ENCODE measurements at regions of chr1 and their contacts with region 1.

Region 1: DNA sequence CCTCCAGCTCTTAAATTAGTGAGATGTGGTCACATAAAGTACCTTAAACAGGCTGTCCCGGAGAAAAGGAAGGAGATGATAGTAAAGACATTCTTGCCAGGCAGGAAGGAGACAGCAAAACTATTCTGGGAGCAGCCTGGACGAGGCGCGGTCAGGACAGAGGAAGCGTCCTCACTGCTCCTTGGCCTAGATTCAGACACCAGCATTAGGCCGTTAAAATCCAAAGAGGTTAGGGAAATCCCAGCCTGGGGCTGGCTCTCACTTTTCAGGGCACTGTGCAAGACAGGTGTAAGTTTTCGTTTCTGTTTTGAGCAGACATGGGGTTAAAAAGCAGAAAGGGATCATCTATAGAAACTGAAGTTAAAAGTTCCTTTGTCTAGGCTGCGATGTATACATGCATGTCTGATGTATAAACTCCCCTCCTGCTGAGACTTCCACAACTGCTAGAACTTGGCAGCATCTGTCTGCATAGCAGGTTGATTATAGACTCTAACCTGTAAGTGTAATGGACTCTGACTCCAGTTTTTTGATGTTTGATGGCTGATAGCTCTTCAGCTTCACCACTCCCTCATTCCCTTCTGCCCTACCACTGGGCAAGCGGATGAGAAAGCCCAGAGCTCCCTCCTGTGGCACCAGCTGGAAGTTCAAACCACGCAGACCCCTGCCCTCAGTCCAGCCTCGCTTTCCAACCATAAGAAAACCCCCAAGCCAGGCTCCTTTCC is 21.5 kb downstream of the STPG1 start:
- DNase-seq: peak; percentile 47 to 50
- H3K4me3 ChIP-seq: no peak overlapping the region
- H3K27ac ChIP-seq: peak overlapping the region; percentile 14; the same call in 1 of the 2 replicates
- H3K4me1 ChIP-seq: peaks cover 8% of the 10 kb centered on the region
- H3K27me3 ChIP-seq: no peaks in the 10 kb centered on the region
- CTCF ChIP-seq: peak; percentile 80

Region 2: DNA sequence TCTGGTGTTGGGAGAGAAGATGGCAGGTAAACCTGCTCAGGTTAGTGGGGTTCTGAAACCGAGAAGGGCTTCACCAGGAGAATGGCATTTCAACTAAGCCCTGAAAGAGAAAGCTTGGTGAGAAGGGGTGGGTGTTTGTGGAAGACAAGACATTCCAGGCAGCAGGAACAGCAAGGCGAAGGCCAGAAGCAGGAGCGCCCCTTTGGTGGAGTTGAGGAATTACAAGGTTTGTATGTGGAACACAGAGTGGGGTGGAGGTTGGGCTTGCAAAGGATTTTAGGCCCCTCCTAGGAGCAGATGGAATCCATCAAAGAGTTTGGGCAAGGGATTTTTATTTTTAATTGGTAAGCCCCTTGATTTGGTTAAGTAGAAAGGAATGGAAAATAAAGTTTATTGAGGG is 673.6 kb before region 1 on chr1:
- CTCF ChIA-PET with region 1: interaction called, 18 read pairs
- POLR2A ChIA-PET with region 1: no interaction called
- intact Hi-C with region 1: no loop called
- DNase-seq: peak in 1 of 2 experiments; percentile 22
- H3K4me3 ChIP-seq: no peak overlapping the region
- H3K27ac ChIP-seq: no peak overlapping the region
- H3K4me1 ChIP-seq: no peaks in the 10 kb centered on the region
- H3K27me3 ChIP-seq: no peaks in the 10 kb centered on the region
- CTCF ChIP-seq: peak; percentile 70

Region 3: GRCh38 chr1:24070821-24071393 is 321.1 kb before region 1 on chr1:
- CTCF ChIA-PET with region 1: no interaction called
- POLR2A ChIA-PET with region 1: no interaction called
- intact Hi-C with region 1: loop called (anchors 1 kb)
- DNase-seq: peak; percentile 57 to 76
- H3K4me3 ChIP-seq: no peak overlapping the region
- H3K27ac ChIP-seq: no peak overlapping the region
- H3K4me1 ChIP-seq: no peaks in the 10 kb centered on the region
- H3K27me3 ChIP-seq: no peaks in the 10 kb centered on the region
- CTCF ChIP-seq: peak; percentile 88

Region 4: DNA sequence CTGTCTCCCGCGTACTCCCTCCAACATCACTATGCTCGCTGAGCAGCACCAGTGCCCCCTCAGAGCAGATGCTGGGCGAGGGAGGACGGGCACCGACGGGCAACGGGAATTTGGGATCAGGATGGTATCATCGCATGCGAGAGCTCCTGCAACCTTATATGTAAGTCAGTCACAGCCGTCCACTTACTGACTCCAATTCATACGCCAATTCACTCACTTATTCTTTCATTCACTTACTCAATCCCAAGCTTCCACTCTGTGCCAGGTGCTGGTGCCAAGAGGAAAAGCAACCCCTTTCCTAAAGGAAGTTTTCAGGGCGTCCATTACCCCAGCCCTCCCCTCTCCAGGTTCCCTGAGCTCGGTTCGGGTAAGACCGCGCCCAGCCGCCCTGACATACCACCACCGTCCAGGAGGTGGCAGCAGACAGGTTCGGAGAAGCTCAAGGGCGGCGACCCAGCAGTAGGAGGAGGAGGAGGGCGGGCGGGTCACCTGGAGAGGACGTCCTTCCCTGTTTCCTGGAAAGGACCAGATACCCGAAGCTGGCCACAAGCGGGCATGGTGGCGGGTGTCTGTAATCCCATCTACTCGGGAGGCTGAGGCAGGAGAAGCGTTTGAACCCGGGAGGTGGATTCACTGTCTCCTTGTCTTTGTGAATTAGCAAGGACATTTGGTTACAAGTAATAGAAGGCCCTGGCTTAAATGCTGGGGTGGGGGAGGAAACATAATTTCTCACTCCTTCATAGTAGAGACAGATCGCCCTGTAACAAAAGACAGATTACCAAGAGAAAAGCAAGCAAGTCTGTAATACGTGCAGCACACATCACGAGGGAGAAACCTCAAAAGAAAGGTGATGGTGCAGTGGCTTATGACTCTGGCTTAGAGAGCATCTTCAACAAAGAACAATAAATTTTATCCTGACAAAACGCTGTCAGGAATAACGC is 241.5 kb before region 1 on chr1:
- CTCF ChIA-PET with region 1: interaction called, 12 read pairs
- POLR2A ChIA-PET with region 1: no interaction called
- intact Hi-C with region 1: loop called (anchors 1 kb)
- DNase-seq: peak; percentile 67 to 92
- H3K4me3 ChIP-seq: peak overlapping the region; percentile 39; the same call in 1 of the 2 replicates
- H3K27ac ChIP-seq: no peak overlapping the region
- H3K4me1 ChIP-seq: peaks cover 10% of the 10 kb centered on the region
- H3K27me3 ChIP-seq: no peaks in the 10 kb centered on the region
- CTCF ChIP-seq: peak; percentile 78

Region 5: DNA sequence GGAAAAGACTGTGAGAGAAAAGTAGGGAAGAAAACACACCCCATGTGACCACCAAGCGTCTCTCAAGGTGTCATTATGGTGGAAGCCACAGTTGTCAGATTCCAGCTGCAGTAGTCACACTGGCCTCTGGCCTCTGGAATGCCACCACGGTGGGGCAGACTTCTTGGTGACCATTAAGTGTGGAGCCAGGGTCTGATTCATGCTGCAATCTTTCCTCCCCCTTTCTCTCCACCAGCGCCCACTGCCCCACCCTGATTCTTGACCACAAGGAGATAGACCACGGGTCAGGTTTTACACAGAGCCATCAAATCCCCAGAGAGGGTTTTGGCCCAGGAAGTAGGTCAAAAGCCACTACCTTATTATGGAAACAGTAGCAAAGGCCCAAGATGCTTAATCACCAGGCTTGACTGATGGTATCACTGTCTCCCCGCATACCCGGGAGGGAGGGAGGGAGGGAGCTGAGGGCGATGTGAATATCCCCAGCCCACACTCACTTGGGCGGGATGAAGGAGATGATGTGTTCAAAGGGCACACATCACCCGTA is 125.6 kb before region 1 on chr1:
- CTCF ChIA-PET with region 1: no interaction called
- POLR2A ChIA-PET with region 1: no interaction called
- intact Hi-C with region 1: loop called (anchors 2 kb)
- DNase-seq: peak; percentile 94 to 98
- H3K4me3 ChIP-seq: no peak overlapping the region
- H3K27ac ChIP-seq: peak overlapping the region; percentile 78
- H3K4me1 ChIP-seq: peaks cover 50% of the 10 kb centered on the region
- H3K27me3 ChIP-seq: no peaks in the 10 kb centered on the region
- CTCF ChIP-seq: 0 out of 2 replicates have a peak, but pooled peaks have one; percentile 19

Region 6: GRCh38 chr1:24635195-24635843 is 243.3 kb after region 1 on chr1:
- CTCF ChIA-PET with region 1: interaction called, 5 read pairs
- POLR2A ChIA-PET with region 1: no interaction called
- intact Hi-C with region 1: loop called (anchors 1 kb)
- DNase-seq: peak in 1 of 2 experiments; percentile 46
- H3K4me3 ChIP-seq: no peak overlapping the region
- H3K27ac ChIP-seq: no peak overlapping the region
- H3K4me1 ChIP-seq: no peaks in the 10 kb centered on the region
- H3K27me3 ChIP-seq: no peaks in the 10 kb centered on the region
- CTCF ChIP-seq: peak; percentile 69

Measured in PC-9 (cell line).